ENCODE measurements at regions of chr17 and their contacts with region 1.

Region 1: DNA sequence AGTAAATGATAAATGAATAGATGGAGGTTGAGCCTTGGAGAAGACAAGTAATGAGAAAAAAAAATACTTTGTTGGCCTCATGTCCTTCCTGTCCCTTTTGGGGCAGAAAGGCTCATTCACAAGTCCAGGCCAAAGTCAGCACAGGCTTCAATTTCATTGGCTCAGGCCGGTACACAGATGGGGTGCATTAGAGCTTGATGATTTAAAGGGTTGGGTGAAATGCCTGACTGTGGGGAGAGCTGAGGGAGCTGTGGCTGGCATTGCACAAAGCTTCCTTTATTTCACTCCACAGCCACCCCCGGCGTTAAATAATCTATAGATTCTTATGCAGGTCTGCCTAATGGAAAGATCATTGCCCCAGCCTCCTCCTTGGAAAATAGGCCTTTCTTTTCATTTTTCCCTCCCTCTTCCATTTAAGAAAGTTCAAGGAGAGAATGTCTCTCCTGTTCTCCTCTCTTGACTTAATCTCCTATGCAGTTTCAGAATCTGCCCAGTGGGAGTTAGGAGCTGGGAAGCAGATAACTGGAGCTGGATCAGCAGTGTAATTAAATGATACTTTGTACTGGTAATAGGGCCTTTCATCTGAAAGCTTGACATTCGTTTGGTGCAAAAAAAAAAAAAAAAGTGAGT is 24.4 kb downstream of the YPEL2 start:
- DNase-seq: no peak
- H3K4me3 Mint-ChIP-seq: no peak overlapping the region
- H3K27ac Mint-ChIP-seq: no peak overlapping the region
- H3K4me1 Mint-ChIP-seq: peaks cover 72% of the 10 kb centered on the region
- H3K27me3 Mint-ChIP-seq: no peaks in the 10 kb centered on the region

Region 2: GRCh38 chr17:59315866-59316265 is 39.9 kb before region 1 on chr17:
- CTCF ChIA-PET with region 1: no interaction called
- POLR2A ChIA-PET with region 1: no interaction called
- DNase-seq: no peak
- H3K4me3 Mint-ChIP-seq: no peak overlapping the region
- H3K27ac Mint-ChIP-seq: no peak overlapping the region
- H3K4me1 Mint-ChIP-seq: peaks cover 5% of the 10 kb centered on the region
- H3K27me3 Mint-ChIP-seq: no peaks in the 10 kb centered on the region

Region 3: DNA sequence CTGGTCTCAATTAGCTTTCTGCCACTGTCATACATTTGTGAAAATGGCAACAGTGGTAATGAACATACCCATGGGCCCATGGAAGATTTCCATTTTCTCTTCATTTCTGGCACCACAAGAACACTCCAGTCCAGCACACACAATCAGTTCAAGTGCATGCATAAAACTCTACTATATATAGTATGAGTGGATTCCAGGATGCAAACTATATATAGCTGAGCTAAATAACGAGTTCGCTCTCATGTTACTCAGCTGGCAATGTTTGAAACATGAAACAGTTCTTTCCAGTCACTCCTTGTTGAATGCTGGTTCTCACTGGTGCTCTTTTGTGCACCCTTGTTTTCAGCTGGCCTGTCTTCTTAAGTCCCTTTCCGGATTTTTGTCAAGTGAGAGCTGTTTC is 134.4 kb after region 1 on chr17:
- CTCF ChIA-PET with region 1: no interaction called
- POLR2A ChIA-PET with region 1: no interaction called
- DNase-seq: no peak
- H3K4me3 Mint-ChIP-seq: no peak overlapping the region
- H3K27ac Mint-ChIP-seq: no peak overlapping the region
- H3K4me1 Mint-ChIP-seq: peaks cover 4% of the 10 kb centered on the region
- H3K27me3 Mint-ChIP-seq: peaks cover 30% of the 10 kb centered on the region

Region 4: DNA sequence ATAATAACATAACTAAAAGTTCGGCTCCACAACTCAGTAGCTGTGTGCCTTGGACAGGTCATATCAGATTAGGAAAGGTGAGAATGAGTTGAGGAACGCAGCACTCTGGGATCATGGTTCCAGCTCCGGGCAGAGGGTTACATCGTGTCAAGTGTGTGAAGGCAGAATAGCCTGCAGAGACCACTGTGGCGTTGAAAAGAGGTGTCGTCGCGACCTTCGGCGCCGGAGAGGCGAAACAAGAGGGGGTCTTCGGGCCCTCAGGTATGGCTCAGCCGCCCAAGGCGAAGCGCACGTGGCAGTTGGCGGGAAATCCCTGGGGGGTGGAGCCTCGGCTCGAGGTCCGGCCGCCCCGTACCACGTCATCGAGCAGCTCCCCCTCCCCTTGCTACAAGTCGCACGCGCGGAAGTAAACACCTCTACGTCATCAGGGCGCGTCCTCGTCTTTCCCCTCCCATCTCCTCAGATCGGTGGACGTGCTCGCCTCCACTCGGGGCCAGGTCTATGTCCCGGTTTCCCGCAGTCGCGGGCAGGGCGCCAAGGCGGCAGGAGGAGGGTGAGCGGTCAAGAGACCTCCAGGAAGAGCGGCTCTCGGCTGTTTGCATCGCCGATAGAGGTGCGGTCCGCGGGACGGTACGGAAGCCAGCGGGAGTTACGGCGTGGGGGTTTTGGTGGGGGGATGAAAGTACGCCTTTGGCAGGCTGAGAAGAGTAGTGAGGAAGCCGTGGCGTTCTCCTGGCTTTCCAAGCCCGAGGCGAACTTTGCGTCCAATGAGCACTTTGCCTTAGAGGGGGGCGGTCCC is 209.6 kb after region 1 on chr17 and contains the start of gene DHX40:
- CTCF ChIA-PET with region 1: interaction called, 3 read pairs
- POLR2A ChIA-PET with region 1: interaction called, 16 read pairs
- DNase-seq: peak; percentile 97
- H3K4me3 Mint-ChIP-seq: peak within 1 kb of the TSS; percentile 100
- H3K27ac Mint-ChIP-seq: peak within 1 kb of the TSS; percentile 100
- H3K4me1 Mint-ChIP-seq: peaks cover 21% of the 10 kb centered on the region
- H3K27me3 Mint-ChIP-seq: no peaks in the 10 kb centered on the region
- total RNA-seq, gene DHX40: 17.9 to 18.4 TPM